Right ventricle myocardium superior (tissue), 1 donor: ENCODE measurements at regions of chr3 and their contacts with region 1.

Region 1: DNA sequence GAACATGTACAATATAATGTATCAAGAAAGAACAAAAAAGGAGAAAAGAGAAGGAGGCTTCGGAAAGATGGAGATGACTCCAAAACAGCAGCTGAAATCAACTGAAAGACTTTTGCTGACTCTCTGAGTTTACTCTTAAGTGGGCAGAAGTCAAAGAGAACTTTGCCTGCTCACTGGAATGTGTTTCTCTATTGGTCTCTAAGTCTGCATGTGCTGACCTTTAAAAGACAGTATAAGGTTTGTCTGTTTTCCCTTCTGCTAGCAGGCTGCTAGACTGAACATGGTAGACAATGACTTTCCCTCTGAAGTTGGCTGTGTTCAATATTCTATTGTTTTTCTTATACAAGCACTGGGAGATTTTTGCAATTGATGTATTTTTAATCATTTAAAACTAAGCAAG is 7.2 kb upstream of the MAP4 start:
- DNase-seq: no peak
- ATAC-seq: peak; percentile 73

Region 2: DNA sequence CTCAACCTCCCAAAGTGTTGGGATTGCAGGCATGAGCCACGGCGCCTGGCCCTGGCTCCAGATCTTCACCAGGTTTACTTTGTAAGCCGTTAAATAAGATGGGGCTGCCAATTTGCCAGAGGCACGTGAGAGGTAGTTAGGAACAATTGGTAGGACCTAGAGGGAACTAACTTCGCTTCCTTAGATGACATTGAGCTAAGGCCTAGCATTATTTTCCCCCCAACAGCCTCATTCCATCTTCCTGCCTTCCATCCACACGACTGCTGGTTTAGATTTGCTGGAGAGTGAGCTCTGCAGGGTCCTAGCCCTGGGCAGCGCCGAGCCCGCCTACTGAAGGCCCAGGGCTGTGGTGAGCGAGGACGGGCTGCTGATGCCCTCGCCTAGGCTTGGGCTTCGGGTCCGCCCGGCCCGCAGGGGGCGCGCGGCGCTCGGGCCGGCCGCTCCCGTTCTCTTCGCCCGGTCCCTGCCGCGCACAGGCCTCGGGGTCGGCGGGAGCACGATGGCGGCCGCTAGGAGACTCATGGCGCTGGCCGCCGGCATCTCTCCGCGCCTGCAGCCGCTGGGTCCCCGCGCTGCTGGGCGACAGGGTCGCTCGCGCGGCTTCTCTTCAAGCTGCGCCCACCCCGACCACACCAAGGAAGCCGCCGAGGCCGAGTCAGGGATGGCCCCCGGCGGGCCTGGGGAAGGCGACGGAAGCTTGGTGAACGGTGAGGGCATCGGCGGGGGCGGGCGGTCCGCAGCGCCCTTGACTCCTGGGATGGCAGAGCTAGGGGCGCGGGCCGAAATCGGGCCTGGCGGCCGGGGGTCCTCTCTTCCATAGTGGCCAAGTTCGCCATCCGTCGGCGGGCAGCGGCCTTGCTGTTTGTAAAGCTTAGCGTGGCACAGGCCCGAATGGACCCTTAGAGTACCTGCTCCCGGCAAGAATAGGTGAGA is 198.6 kb before region 1 on chr3:
- intact Hi-C with region 1: no loop called
- DNase-seq: peak; percentile 86
- ATAC-seq: peak; percentile 100

Region 3: GRCh38 chr3:47989981-47990440 is 33.4 kb before region 1 on chr3:
- intact Hi-C with region 1: no loop called
- DNase-seq: peak; percentile 64
- ATAC-seq: peak; percentile 93

Region 4: DNA sequence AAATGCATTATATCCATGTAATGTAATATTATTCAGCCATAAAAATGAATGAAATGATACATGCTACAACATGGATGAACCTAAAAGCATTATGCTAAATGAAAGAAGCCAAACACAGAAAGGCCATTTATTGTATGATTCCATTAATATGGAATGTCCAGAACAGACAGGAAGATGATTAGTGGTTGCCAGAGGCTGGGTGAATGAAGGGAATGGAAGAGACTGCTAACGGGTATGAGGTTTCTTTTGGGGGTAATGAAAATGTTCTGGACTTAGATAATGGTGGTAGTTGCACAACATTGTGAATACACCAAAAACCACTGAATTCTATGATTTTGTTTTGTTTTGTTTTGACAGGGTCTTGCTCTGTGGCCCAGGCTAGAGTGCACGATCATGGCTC is 54.4 kb after region 1 on chr3:
- intact Hi-C with region 1: loop called (anchors 10 kb)
- DNase-seq: no peak
- ATAC-seq: no peak